H1 (cell line): ENCODE measurements at regions of chr17 and their contacts with region 1.

Region 1: GRCh38 chr17:30794372-30794771 is 30.1 kb downstream of the CRLF3 start:
- DNase-seq: no peak
- H3K4me3 ChIP-seq: no peak overlapping the region
- H3K27ac ChIP-seq: no peak overlapping the region
- H3K4me1 ChIP-seq: no peaks in the 10 kb centered on the region
- H3K27me3 ChIP-seq: no peaks in the 10 kb centered on the region
- CTCF ChIP-seq: no peak
- EP300 ChIP-seq: no peak
- POLR2A ChIP-seq: no peak
- RAD21 ChIP-seq: no peak

Region 2: DNA sequence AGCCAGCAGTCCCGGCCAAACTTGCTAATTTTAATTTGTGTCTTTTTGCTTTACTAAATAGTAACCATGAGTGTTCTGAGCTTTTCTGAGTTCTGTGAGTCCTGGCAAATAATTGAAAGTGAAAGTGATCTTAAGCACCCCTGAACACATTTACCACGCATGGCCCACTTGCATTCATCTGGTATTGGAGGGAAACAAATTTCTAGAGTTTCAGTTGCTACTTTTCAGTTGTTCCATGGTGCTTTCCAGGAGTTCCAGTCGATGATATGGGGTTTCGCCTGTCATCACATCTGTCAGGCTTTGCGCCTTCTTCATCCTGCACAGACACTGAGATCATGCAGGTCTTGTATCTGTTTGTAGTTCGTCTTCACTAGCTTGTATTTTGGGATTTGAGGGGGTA is 14.0 kb before region 1 on chr17:
- CTCF ChIA-PET with region 1: no interaction called
- POLR2A ChIA-PET with region 1: interaction called, 13 read pairs
- DNase-seq: no peak
- H3K4me3 ChIP-seq: no peak overlapping the region
- H3K27ac ChIP-seq: no peak overlapping the region
- H3K4me1 ChIP-seq: no peaks in the 10 kb centered on the region
- H3K27me3 ChIP-seq: no peaks in the 10 kb centered on the region
- CTCF ChIP-seq: no peak
- EP300 ChIP-seq: no peak
- POLR2A ChIP-seq: no peak
- RAD21 ChIP-seq: no peak